ENCODE measurements at regions of chr1 and their contacts with region 1.

Region 1: DNA sequence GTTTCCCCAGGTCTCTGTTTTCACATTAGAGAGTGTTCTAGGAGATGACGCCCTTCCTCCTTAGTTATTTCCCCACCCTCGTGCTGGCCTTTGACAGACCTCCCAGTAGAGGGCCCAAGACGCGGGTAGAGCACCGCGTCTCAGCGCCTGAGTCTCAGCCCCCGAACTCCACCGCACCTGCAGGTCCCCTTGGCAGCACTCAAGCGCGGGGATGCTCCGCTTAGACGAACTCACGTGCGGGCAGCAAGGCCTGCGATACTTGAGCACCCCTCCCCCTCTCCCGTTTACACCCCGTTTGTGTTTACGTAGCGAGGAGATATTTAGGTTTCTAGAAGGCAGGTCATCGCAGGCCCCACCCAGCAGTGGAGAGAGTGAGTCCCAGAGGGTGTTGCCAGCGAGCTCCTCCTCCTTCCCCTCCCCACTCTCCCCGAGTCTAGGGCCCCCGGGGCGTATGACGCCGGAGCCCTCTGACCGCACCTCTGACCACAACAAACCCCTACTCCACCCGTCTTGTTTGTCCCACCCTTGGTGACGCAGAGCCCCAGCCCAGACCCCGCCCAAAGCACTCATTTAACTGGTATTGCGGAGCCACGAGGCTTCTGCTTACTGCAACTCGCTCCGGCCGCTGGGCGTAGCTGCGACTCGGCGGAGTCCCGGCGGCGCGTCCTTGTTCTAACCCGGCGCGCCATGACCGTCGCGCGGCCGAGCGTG is at the start of gene CD55:
- DNase-seq: peak; percentile 98 to 99
- ATAC-seq: peak; percentile 88 to 96 (median 88)
- H3K4me3 ChIP-seq: peak within 1 kb of the TSS; percentile 91
- H3K4me3 Mint-ChIP-seq: peak within 1 kb of the TSS; percentile 95
- H3K27ac ChIP-seq: peak within 1 kb of the TSS; percentile 93
- H3K27ac Mint-ChIP-seq: peak within 1 kb of the TSS; percentile 96 to 97
- H3K4me1 ChIP-seq: peaks cover 13% of the 10 kb centered on the region
- H3K4me1 Mint-ChIP-seq: peaks cover 26 to 29% of the 10 kb centered on the region in 2 donors
- H3K27me3 ChIP-seq: no peaks in the 10 kb centered on the region
- H3K27me3 Mint-ChIP-seq: no peaks in the 10 kb centered on the region
- CTCF ChIP-seq: peak; percentile 11
- total RNA-seq, gene CD55: 80.7 to 138 (median 113) TPM

Region 2: DNA sequence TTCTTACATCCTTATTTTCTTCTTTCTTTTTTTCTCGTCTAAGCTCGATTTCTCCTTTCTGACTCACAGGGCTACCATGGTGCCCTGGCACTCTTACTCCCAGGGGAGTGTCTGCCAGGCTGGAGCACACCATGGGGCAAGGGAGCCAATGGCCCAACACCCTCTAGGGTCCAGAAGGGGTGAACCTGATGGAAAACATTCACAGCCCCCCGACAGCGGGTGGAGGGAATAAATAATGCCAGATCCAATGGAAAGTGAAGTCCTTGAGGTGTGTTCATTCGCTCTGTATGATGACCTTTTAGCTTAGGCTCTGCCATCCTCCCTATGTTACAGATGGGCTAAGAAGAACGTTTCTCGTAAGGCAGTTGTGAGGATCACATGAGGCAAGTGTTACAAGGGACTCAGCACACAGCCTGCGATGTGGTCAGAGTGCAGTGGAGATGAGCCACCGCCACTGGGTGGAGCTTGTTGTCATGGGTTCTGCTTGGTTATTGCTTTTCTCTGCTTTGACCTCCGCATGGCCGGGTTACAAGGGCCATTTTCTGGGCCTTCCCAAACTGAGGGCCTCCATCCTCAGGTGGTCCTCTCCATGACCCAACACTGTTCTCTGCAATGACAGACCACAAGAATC is 396.0 kb before region 1 on chr1:
- intact Hi-C with region 1: loop called (anchors 10 kb)
- DNase-seq: peak; percentile 80 to 84
- ATAC-seq: peak; percentile 68 to 86 (median 85)
- H3K4me3 ChIP-seq: no peak overlapping the region
- H3K4me3 Mint-ChIP-seq: no peak overlapping the region
- H3K27ac ChIP-seq: peak overlapping the region; percentile 93
- H3K27ac Mint-ChIP-seq: no peak overlapping the region
- H3K4me1 ChIP-seq: peaks cover 78% of the 10 kb centered on the region
- H3K4me1 Mint-ChIP-seq: peaks cover 9 to 17% of the 10 kb centered on the region in 2 donors
- H3K27me3 ChIP-seq: no peaks in the 10 kb centered on the region
- H3K27me3 Mint-ChIP-seq: no peaks in the 10 kb centered on the region
- CTCF ChIP-seq: no peak

Region 3: DNA sequence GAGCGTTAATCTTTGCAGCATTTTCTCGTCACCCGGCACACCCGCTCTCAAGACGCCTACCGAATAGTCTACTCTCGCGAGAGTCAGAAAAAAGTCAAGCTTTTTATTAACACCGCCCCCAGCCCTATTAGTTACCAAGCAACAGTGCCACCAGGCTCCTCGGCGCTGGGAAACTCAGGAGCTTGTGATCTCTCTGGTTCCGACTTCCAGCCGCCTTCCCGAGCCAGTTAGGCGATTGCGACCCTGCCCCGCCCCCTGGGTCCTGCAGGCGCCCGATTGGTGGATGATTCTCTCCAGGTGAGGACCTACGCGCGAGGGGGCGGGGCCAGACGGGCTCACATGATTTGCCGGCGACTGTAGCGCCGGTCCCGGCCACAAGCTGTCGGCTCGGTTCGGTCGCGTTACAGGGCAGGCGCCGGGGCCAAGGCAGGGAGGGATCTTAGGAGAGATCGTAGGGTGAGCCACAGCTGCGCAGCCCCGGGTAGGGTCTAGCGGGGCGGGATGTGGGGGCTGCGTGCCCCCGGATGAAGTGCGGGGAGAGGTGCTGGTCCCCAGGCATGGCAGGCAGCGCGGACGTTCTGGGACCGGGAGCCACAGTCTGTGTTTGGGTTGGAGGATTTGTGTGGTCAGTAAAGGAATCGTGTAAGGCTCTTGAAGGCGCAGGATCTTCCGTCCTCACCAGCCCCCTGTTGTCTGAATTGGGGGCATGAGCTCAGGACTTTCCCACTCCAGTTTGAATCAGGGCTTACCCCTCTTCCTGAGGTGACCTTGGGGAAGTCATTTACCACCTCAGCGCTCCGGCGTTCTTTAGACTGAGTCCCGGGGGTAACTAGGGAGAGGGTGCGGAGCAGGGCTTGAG is 268.1 kb before region 1 on chr1 and contains the start of gene PFKFB2:
- intact Hi-C with region 1: loop called (anchors 5 kb)
- DNase-seq: peak; percentile 91 to 95
- ATAC-seq: peak; percentile 83 to 93 (median 89)
- H3K4me3 ChIP-seq: peak within 1 kb of the TSS; percentile 60
- H3K4me3 Mint-ChIP-seq: peak within 1 kb of the TSS; percentile 100
- H3K27ac ChIP-seq: peak within 1 kb of the TSS; percentile 67
- H3K27ac Mint-ChIP-seq: peak within 1 kb of the TSS; percentile 96 to 97
- H3K4me1 ChIP-seq: peaks cover 25% of the 10 kb centered on the region
- H3K4me1 Mint-ChIP-seq: peaks cover 40 to 43% of the 10 kb centered on the region in 2 donors
- H3K27me3 ChIP-seq: no peaks in the 10 kb centered on the region
- H3K27me3 Mint-ChIP-seq: no peaks in the 10 kb centered on the region
- CTCF ChIP-seq: no peak
- total RNA-seq, gene PFKFB2: 5.3 to 8.5 (median 7.4) TPM

Region 4: DNA sequence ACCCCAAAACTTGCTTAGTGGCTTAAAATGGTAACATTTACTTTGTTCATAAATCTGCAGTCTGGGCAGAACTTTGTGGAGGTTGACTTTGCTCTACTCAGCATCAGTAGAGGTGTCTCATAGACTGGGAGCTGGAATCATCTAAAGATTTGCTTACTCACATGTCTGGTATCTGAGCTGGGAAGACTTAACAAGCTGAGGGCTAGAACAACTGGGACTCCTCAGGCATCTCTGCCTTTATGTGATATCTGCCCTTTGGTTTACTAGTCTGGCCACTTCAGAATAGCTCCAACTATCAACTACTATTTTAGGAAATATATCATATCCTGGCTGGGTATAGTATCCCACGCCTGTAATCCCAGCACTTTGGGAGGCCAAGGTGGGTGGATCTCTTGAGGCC is 134.7 kb before region 1 on chr1:
- intact Hi-C with region 1: no loop called
- DNase-seq: no peak
- ATAC-seq: no peak
- H3K4me3 ChIP-seq: no peak overlapping the region
- H3K4me3 Mint-ChIP-seq: no peak overlapping the region
- H3K27ac ChIP-seq: no peak overlapping the region
- H3K27ac Mint-ChIP-seq: no peak overlapping the region
- H3K4me1 ChIP-seq: no peaks in the 10 kb centered on the region
- H3K4me1 Mint-ChIP-seq: no peaks in the 10 kb centered on the region
- H3K27me3 ChIP-seq: peaks cover 2% of the 10 kb centered on the region
- H3K27me3 Mint-ChIP-seq: peaks cover 8 to 46% of the 10 kb centered on the region in 2 donors
- CTCF ChIP-seq: no peak

Region 5: GRCh38 chr1:207336559-207337467 is 15.6 kb after region 1 on chr1:
- intact Hi-C with region 1: loop called (anchors 1 kb)
- DNase-seq: peak; percentile 35 to 73
- ATAC-seq: peak; percentile 64 to 69 (median 65)
- H3K4me3 ChIP-seq: no peak overlapping the region
- H3K4me3 Mint-ChIP-seq: peak overlapping the region; percentile 77
- H3K27ac ChIP-seq: peak overlapping the region; percentile 95
- H3K27ac Mint-ChIP-seq: peak overlapping the region; percentile 92 to 96
- H3K4me1 ChIP-seq: peaks cover 18% of the 10 kb centered on the region
- H3K4me1 Mint-ChIP-seq: peaks cover 29 to 59% of the 10 kb centered on the region in 2 donors
- H3K27me3 ChIP-seq: no peaks in the 10 kb centered on the region
- H3K27me3 Mint-ChIP-seq: no peaks in the 10 kb centered on the region
- CTCF ChIP-seq: no peak

Region 6: GRCh38 chr1:207374887-207375286 is 53.7 kb after region 1 on chr1:
- intact Hi-C with region 1: no loop called
- DNase-seq: no peak
- ATAC-seq: no peak
- H3K4me3 ChIP-seq: no peak overlapping the region
- H3K4me3 Mint-ChIP-seq: no peak overlapping the region
- H3K27ac ChIP-seq: no peak overlapping the region
- H3K27ac Mint-ChIP-seq: no peak overlapping the region
- H3K4me1 ChIP-seq: no peaks in the 10 kb centered on the region
- H3K4me1 Mint-ChIP-seq: peaks cover 7 to 10% of the 10 kb centered on the region in 2 donors
- H3K27me3 ChIP-seq: no peaks in the 10 kb centered on the region
- H3K27me3 Mint-ChIP-seq: peaks cover 0 to 10% of the 10 kb centered on the region in 2 donors
- CTCF ChIP-seq: no peak

Region 7: GRCh38 chr1:207404849-207405525 is 83.8 kb after region 1 on chr1:
- intact Hi-C with region 1: loop called (anchors 5 kb)
- DNase-seq: peak in 1 of 2 donors; percentile 78
- ATAC-seq: peak; percentile 81 to 89 (median 88)
- H3K4me3 ChIP-seq: no peak overlapping the region
- H3K4me3 Mint-ChIP-seq: no peak overlapping the region
- H3K27ac ChIP-seq: no peak overlapping the region
- H3K27ac Mint-ChIP-seq: no peak overlapping the region
- H3K4me1 ChIP-seq: no peaks in the 10 kb centered on the region
- H3K4me1 Mint-ChIP-seq: no peaks in the 10 kb centered on the region
- H3K27me3 ChIP-seq: no peaks in the 10 kb centered on the region
- H3K27me3 Mint-ChIP-seq: peaks cover 10 to 14% of the 10 kb centered on the region in 2 donors
- CTCF ChIP-seq: peak; percentile 93

Region 8: DNA sequence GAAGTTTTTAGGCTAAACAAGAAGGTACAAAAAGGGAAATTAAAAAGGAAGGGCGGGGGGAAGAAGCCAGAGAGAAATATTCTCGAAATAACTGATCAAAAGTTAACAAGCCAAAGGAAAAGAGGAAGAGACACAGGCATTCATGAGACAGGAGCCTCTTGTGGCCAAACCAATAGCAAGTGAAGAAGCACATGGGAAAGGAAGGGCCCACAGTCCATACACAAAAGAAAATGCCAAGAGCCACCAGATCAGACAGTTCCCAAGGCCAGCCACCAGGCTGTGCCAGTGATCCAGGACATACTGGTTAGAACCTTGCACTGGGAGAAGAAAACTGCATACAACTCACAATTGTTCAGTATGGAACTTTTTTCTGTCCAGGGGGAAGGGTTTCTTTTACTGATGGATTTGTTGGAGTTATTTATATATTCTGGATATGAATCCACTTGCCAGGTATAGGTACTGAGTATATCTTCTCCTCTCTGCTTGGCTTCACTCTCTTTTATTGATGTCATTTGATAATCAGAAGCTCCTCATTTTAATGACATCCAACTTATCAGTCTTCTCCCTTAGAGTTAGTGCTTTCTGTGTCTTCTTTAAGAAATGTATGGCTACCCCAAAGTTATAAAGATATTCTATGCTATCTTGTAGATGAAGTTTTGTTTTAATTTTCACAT is 507.4 kb after region 1 on chr1:
- intact Hi-C with region 1: loop called (anchors 10 kb)
- DNase-seq: peak; percentile 47 to 84
- ATAC-seq: peak; percentile 14 to 36 (median 18)
- H3K4me3 ChIP-seq: no peak overlapping the region
- H3K4me3 Mint-ChIP-seq: no peak overlapping the region
- H3K27ac ChIP-seq: peak overlapping the region; percentile 12
- H3K27ac Mint-ChIP-seq: peak overlapping the region; percentile 99
- H3K4me1 ChIP-seq: peaks cover 76% of the 10 kb centered on the region
- H3K4me1 Mint-ChIP-seq: peaks cover 81 to 85% of the 10 kb centered on the region in 2 donors
- H3K27me3 ChIP-seq: no peaks in the 10 kb centered on the region
- H3K27me3 Mint-ChIP-seq: peaks cover 0 to 3% of the 10 kb centered on the region in 2 donors
- CTCF ChIP-seq: peak; percentile 67